OCI-LY7 (cell line): ENCODE measurements at regions of chr10 and their contacts with region 1.

Region 1: GRCh38 chr10:26334932-26335573 is 103.1 kb upstream of the APBB1IP start:
- DNase-seq: peak; percentile 90
- H3K4me3 ChIP-seq: peak overlapping the region; percentile 54
- H3K27ac ChIP-seq: peak overlapping the region; percentile 16
- H3K4me1 ChIP-seq: peaks cover 12% of the 10 kb centered on the region
- CTCF ChIP-seq: peak; percentile 99

Region 2: GRCh38 chr10:26378861-26379294 is 43.8 kb after region 1 on chr10:
- CTCF ChIA-PET with region 1: no interaction called
- POLR2A ChIA-PET with region 1: no interaction called
- intact Hi-C with region 1: no loop called
- DNase-seq: no peak
- H3K4me3 ChIP-seq: no peak overlapping the region
- H3K27ac ChIP-seq: no peak overlapping the region
- H3K4me1 ChIP-seq: peaks cover 14% of the 10 kb centered on the region
- CTCF ChIP-seq: no peak

Region 3: GRCh38 chr10:26503911-26504310 is 168.9 kb after region 1 on chr10:
- CTCF ChIA-PET with region 1: no interaction called
- POLR2A ChIA-PET with region 1: no interaction called
- intact Hi-C with region 1: loop called (anchors 5 kb)
- DNase-seq: peak; percentile 28
- H3K4me3 ChIP-seq: no peak overlapping the region
- H3K27ac ChIP-seq: no peak overlapping the region
- H3K4me1 ChIP-seq: no peaks in the 10 kb centered on the region
- CTCF ChIP-seq: peak; percentile 66

Region 4: GRCh38 chr10:26682931-26683330 is 347.9 kb after region 1 on chr10:
- CTCF ChIA-PET with region 1: interaction called, 4 read pairs
- POLR2A ChIA-PET with region 1: no interaction called
- intact Hi-C with region 1: loop called (anchors 1 kb)
- DNase-seq: peak; percentile 25
- H3K4me3 ChIP-seq: no peak overlapping the region
- H3K27ac ChIP-seq: no peak overlapping the region
- H3K4me1 ChIP-seq: peaks cover 13% of the 10 kb centered on the region
- CTCF ChIP-seq: no peak

Region 5: GRCh38 chr10:26725837-26726727 is 391.0 kb after region 1 on chr10:
- CTCF ChIA-PET with region 1: no interaction called
- POLR2A ChIA-PET with region 1: no interaction called
- intact Hi-C with region 1: loop called (anchors 2 kb)
- DNase-seq: peak; percentile 73
- H3K4me3 ChIP-seq: no peak overlapping the region
- H3K27ac ChIP-seq: no peak overlapping the region
- H3K4me1 ChIP-seq: peaks cover 3% of the 10 kb centered on the region
- CTCF ChIP-seq: peak; percentile 99